H1 (cell line): ENCODE measurements at regions of chr14 and their contacts with region 1.

Region 1: GRCh38 chr14:64636208-64636979 is 67.8 kb upstream of the PLEKHG3 start:
- DNase-seq: peak; percentile 53 to 89
- H3K4me3 ChIP-seq: no peak overlapping the region
- H3K27ac ChIP-seq: no peak overlapping the region
- H3K4me1 ChIP-seq: peaks cover 0 to 8% (median 4%) of the 10 kb centered on the region in 4 experiments; a peak in 4 of 7 replicates
- H3K27me3 ChIP-seq: no peaks in the 10 kb centered on the region
- CTCF ChIP-seq: peak; percentile 84 to 93 (median 85)
- EP300 ChIP-seq: no peak
- POLR2A ChIP-seq: no peak
- RAD21 ChIP-seq: peak; percentile 81 to 87

Region 2: GRCh38 chr14:64503478-64504309 is 132.7 kb before region 1 on chr14 and contains the start of gene ZBTB25:
- CTCF ChIA-PET with region 1: interaction called, 5 read pairs
- POLR2A ChIA-PET with region 1: interaction called, 11 read pairs
- DNase-seq: peak; percentile 78 to 88
- H3K4me3 ChIP-seq: peak within 1 kb of the TSS; percentile 68 to 93 (median 78)
- H3K27ac ChIP-seq: peak within 1 kb of the TSS; percentile 96
- H3K4me1 ChIP-seq: peaks cover 2 to 14% (median 9%) of the 10 kb centered on the region in 4 experiments; a peak in 5 of 7 replicates
- H3K27me3 ChIP-seq: no peaks in the 10 kb centered on the region
- CTCF ChIP-seq: no peak
- EP300 ChIP-seq: no peak
- POLR2A ChIP-seq: peak; percentile 15 to 62; a peak in 2 of 3 replicates
- RAD21 ChIP-seq: no peak
- total RNA-seq, gene ZBTB25: 11.4 and 11.5 TPM in 2 replicates

Region 3: DNA sequence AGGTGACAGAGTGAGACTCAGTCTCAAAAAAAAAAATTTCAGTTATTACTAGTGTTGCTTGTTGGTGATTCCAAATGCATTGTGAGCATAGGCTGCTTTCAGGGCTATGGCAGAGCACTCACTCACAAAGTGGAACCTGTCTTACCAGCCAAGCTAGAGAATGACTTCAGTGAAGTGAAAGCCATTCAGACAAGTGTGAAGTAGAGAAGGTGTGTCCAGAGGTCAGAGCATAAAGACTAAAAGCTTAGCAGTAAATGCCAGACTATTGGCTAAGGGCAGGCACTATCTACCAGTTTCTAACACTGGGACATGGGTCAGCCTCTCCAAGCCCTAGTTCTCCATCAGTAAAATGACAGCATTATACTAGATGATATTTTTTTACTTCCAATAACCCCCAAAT is 74.0 kb before region 1 on chr14:
- CTCF ChIA-PET with region 1: interaction called, 12 read pairs
- POLR2A ChIA-PET with region 1: no interaction called
- DNase-seq: no peak
- H3K4me3 ChIP-seq: no peak overlapping the region
- H3K27ac ChIP-seq: no peak overlapping the region
- H3K4me1 ChIP-seq: peaks cover 0 to 7% (median 0%) of the 10 kb centered on the region in 4 experiments; a peak in 2 of 7 replicates
- H3K27me3 ChIP-seq: no peaks in the 10 kb centered on the region
- CTCF ChIP-seq: no peak
- EP300 ChIP-seq: no peak
- POLR2A ChIP-seq: no peak
- RAD21 ChIP-seq: no peak

Region 4: GRCh38 chr14:64605926-64606702 is 30.3 kb before region 1 on chr14:
- CTCF ChIA-PET with region 1: interaction called, 13 read pairs
- POLR2A ChIA-PET with region 1: no interaction called
- DNase-seq: peak in 1 of 2 experiments; percentile 33
- H3K4me3 ChIP-seq: no peak overlapping the region
- H3K27ac ChIP-seq: no peak overlapping the region
- H3K4me1 ChIP-seq: no peaks in the 10 kb centered on the region; a peak in 1 of 7 replicates
- H3K27me3 ChIP-seq: no peaks in the 10 kb centered on the region
- CTCF ChIP-seq: no peak
- EP300 ChIP-seq: no peak
- POLR2A ChIP-seq: no peak
- RAD21 ChIP-seq: no peak